K562 (cell line): ENCODE measurements at regions of chr1 and their contacts with region 1.

Region 1: GRCh38 chr1:16946646-16947045 is 24.9 kb downstream of the CROCC start:
- DNase-seq: no peak
- ATAC-seq: no peak
- H3K4me3 ChIP-seq: no peak overlapping the region
- H3K27ac ChIP-seq: no peak overlapping the region
- H3K4me1 ChIP-seq: peaks cover 0 to 17% of the 10 kb centered on the region in 2 experiments; a peak in 2 of 5 replicates
- H3K27me3 ChIP-seq: no peaks in the 10 kb centered on the region
- CTCF ChIP-seq: no peak
- EP300 ChIP-seq: no peak
- POLR2A ChIP-seq: no peak
- RAD21 ChIP-seq: no peak

Region 2: DNA sequence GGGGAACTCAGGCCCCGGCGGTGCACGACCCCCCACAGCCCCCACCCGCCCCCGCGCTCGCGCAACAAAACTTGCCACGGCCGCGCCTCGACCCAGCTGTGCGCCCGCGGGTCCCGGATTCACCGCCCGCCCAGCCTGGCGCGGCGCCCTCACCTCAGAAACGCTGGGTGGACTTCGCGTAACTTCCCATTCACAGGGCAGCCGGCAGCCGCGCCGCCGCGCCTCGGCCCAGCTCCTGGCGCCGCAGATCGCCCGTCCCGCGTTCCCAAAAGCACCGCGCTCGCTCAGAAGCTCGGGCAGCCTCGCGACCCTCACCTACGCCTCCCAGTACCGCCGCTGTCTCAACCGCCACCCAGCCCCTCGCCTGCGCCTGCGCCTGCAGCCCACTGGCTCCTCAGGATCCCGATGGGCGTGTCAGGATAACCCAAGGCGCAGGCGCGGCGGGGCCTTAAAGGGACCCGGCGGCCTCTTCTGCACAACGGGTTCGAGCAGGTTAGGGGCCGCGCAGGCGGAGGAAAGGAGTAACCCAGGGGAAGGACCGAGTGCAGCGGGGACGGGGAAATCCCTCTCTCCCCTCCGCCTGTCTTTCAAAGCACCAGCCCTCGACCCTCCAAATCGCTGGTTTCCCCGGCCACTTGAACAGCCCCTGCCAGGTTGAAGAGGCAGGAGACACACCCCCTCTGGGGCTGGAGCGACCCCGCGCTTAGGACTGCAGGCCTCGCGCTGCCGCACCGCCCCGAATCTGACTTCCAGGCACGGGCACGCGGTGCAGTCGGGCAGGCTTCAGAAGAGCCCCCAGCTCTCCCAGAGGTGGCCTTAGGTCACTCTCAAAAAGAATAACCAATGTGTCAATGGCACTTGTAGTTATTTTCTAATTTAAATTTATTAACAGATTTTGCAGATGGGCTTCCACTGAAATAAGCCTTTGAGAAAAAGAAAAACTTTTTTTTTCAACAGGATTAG is 333.2 kb before region 1 on chr1 and contains the start of gene NBPF1:
- CTCF ChIA-PET with region 1: interaction called, 18 read pairs
- POLR2A ChIA-PET with region 1: interaction called, 15 read pairs
- in situ Hi-C with region 1: no loop called
- intact Hi-C with region 1: loop called (anchors 2 kb)
- DNase-seq: peak; percentile 100
- ATAC-seq: peak; percentile 99
- H3K4me3 ChIP-seq: peak within 1 kb of the TSS; percentile 55
- H3K27ac ChIP-seq: peak within 1 kb of the TSS; percentile 42
- H3K4me1 ChIP-seq: peaks cover 25 to 32% of the 10 kb centered on the region in 2 experiments
- H3K27me3 ChIP-seq: no peaks in the 10 kb centered on the region
- CTCF ChIP-seq: peak in 2 of 3 experiments; percentile 30 to 32; a peak in 4 of 6 replicates
- EP300 ChIP-seq: peak; percentile 61; the same call in 1 of the 2 replicates
- POLR2A ChIP-seq: no peak
- RAD21 ChIP-seq: peak; percentile 19 to 52; a peak in 3 of 4 replicates
- polyA plus RNA-seq, gene NBPF1: 5.2 to 7.9 TPM

Region 3: GRCh38 chr1:16625497-16626408 is 320.9 kb before region 1 on chr1:
- CTCF ChIA-PET with region 1: interaction called, 7 read pairs
- POLR2A ChIA-PET with region 1: interaction called, 17 read pairs
- in situ Hi-C with region 1: loop called (anchors 5 kb)
- intact Hi-C with region 1: loop called (anchors 1 kb)
- DNase-seq: peak in 3 of 4 experiments; percentile 46 to 49 (median 47)
- ATAC-seq: no peak
- H3K4me3 ChIP-seq: no peak overlapping the region
- H3K27ac ChIP-seq: no peak overlapping the region
- H3K4me1 ChIP-seq: peaks cover 4 to 36% of the 10 kb centered on the region in 2 experiments; a peak in 3 of 5 replicates
- H3K27me3 ChIP-seq: no peaks in the 10 kb centered on the region
- CTCF ChIP-seq: 0 out of 6 replicates have a peak, but pooled peaks of 1 of the 3 experiments have one; percentile 2
- EP300 ChIP-seq: no peak
- POLR2A ChIP-seq: no peak; the same call in 1 of the 2 replicates
- RAD21 ChIP-seq: no peak

Region 4: DNA sequence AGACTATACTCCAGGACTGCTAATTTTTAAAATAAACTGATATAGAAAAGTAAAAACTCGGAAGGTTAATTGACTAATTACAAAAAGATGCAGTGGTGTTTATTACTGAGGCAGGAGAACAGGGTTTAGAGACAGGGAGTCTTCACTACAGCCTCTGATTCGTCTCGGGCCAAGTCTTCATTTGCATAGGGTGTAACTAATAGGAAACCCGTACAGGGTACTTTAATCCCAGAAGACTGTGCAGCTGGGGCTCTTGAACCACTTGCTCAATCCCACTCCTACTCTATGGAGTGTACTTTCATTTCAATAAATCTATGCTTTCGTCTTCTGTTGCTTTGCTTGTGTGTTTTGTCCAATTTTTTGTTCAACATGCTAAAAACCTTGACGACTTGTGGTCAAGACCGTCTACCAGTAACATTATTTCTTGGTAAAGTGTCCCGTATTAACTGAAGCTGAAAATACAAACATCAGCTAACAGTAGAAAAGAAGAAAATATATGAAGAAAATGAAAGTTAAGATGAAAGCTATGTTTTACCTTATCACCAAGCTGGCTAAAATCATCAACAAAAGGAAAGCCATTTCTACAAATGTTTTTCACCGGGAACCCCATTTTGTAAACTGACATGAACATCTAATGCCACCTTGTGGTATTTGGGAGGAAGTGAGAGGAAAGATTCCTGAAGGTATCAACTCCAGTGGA is 99.1 kb after region 1 on chr1:
- CTCF ChIA-PET with region 1: interaction called, 22 read pairs
- POLR2A ChIA-PET with region 1: no interaction called
- in situ Hi-C with region 1: no loop called
- intact Hi-C with region 1: loop called (anchors 2 kb)
- DNase-seq: peak in 2 of 4 experiments; percentile 58 to 60
- ATAC-seq: peak; percentile 80
- H3K4me3 ChIP-seq: no peak overlapping the region
- H3K27ac ChIP-seq: no peak overlapping the region
- H3K4me1 ChIP-seq: no peaks in the 10 kb centered on the region; a peak in 2 of 5 replicates
- H3K27me3 ChIP-seq: no peaks in the 10 kb centered on the region
- CTCF ChIP-seq: peak; percentile 57 to 91 (median 69); a peak in 5 of 6 replicates
- EP300 ChIP-seq: no peak
- POLR2A ChIP-seq: no peak
- RAD21 ChIP-seq: peak; percentile 84 to 88

Region 5: DNA sequence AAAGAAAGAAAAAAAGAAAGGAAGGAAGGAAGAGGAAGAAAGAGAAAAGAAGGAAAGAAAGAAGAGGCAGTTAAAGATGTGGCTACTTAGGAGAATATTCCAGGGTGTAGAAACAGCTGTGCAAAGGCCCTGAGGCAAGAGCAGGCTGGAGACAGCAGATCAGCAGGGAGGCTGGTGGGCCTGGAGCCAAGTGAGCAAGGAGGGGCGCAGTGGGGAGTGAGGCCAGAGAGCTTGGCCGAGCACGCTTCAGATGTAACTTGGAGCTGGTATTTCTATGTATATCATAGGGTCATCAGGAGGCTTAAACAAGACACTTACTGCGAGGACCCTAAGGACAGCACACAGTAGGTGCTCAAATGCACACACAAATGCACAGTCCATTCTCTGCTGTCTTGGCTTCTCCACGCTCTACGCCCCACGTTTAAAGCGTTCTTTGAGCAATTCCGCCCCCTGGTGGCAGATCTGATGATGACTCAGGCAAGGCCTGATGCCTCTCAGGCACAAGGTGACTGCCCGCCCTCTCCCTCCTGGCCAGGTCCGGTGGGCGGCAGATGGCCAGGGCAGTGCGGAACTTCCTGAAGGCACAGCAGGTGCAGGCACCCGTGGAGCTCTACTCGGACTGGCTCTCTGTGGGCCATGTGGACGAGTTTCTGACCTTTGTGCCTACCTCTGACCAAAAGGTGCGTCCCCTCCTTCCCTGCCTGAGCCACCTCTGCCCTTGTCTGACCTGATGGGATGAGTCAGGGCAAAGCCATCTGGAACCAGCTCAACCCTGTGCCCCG is 290.3 kb after region 1 on chr1:
- CTCF ChIA-PET with region 1: interaction called, 4 read pairs
- POLR2A ChIA-PET with region 1: no interaction called
- in situ Hi-C with region 1: no loop called
- intact Hi-C with region 1: loop called (anchors 2 kb)
- DNase-seq: peak; percentile 87 to 92 (median 91)
- ATAC-seq: peak; percentile 97
- H3K4me3 ChIP-seq: no peak overlapping the region
- H3K27ac ChIP-seq: no peak overlapping the region
- H3K4me1 ChIP-seq: peaks cover 0 to 3% of the 10 kb centered on the region in 2 experiments; a peak in 1 of 5 replicates
- H3K27me3 ChIP-seq: peaks cover 13 to 53% of the 10 kb centered on the region in 2 experiments; a peak in 4 of 5 replicates
- CTCF ChIP-seq: peak; percentile 91 to 95 (median 94)
- EP300 ChIP-seq: no peak
- POLR2A ChIP-seq: no peak
- RAD21 ChIP-seq: peak; percentile 79 to 98

Region 6: GRCh38 chr1:17865912-17866739 is 919.5 kb after region 1 on chr1:
- CTCF ChIA-PET with region 1: no interaction called
- POLR2A ChIA-PET with region 1: no interaction called
- in situ Hi-C with region 1: no loop called
- intact Hi-C with region 1: no loop called
- DNase-seq: no peak
- ATAC-seq: no peak
- H3K4me3 ChIP-seq: no peak overlapping the region
- H3K27ac ChIP-seq: no peak overlapping the region
- H3K4me1 ChIP-seq: no peaks in the 10 kb centered on the region
- H3K27me3 ChIP-seq: peaks cover 0 to 4% of the 10 kb centered on the region in 2 experiments; a peak in 2 of 5 replicates
- CTCF ChIP-seq: no peak
- EP300 ChIP-seq: no peak
- POLR2A ChIP-seq: no peak
- RAD21 ChIP-seq: no peak